ENCODE measurements at regions of chr18 and their contacts with region 1.

Region 1: DNA sequence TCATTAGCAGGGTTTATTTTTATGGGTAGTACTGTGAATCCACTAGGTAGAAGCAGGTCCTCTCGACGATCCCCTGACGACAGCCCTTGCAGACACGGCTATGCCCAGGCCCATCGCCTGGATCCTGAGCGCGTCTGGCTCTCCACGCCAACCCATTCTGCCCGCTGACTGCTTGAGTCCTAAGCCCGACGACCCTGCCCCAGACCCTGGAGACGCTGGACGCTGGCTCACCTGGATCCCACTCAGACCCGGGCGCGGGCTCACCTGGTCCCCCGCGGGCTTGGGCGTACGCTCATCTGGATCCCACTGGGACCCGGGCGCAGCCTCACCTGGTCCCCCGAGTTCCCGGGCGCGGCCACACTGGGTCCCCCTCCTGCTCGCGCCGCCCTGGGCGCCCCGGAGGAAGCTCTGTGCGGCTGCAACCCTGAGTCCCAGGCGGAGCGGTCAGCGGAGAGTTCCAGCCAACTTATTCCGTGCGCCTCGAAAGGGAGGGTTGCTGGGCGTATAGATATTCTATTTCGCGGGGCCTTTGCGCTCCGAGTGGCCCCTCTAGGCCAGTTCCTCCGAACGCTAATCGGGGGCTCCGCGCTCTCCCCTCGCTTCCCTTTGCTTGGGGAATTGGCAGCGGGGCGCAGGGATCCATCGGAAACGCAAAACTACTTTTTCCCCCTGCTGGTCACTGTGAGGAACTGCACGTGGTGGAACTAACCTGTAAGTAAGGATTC is 22.4 kb upstream of the RMP24 start:
- DNase-seq: peak; percentile 33
- H3K4me3 ChIP-seq: peak overlapping the region; percentile 62
- H3K27ac ChIP-seq: no peak overlapping the region
- H3K27me3 ChIP-seq: peaks cover 7% of the 10 kb centered on the region
- CTCF ChIP-seq: peak; percentile 94

Region 2: GRCh38 chr18:34543945-34544344 is 1406.1 kb before region 1 on chr18:
- CTCF ChIA-PET with region 1: no interaction called
- POLR2A ChIA-PET with region 1: no interaction called
- DNase-seq: no peak
- H3K4me3 ChIP-seq: no peak overlapping the region
- H3K27ac ChIP-seq: no peak overlapping the region
- H3K27me3 ChIP-seq: no peaks in the 10 kb centered on the region
- CTCF ChIP-seq: no peak

Region 3: GRCh38 chr18:35756506-35757117 is 193.5 kb before region 1 on chr18:
- CTCF ChIA-PET with region 1: interaction called, 42 read pairs
- POLR2A ChIA-PET with region 1: no interaction called
- DNase-seq: peak; percentile 6
- H3K4me3 ChIP-seq: no peak overlapping the region
- H3K27ac ChIP-seq: no peak overlapping the region
- H3K27me3 ChIP-seq: peaks cover 3% of the 10 kb centered on the region
- CTCF ChIP-seq: peak; percentile 83

Region 4: GRCh38 chr18:35889677-35890076 is 60.4 kb before region 1 on chr18:
- CTCF ChIA-PET with region 1: no interaction called
- POLR2A ChIA-PET with region 1: no interaction called
- DNase-seq: no peak
- H3K4me3 ChIP-seq: no peak overlapping the region
- H3K27ac ChIP-seq: no peak overlapping the region
- H3K27me3 ChIP-seq: no peaks in the 10 kb centered on the region
- CTCF ChIP-seq: no peak

Region 5: GRCh38 chr18:35920623-35921022 is 29.4 kb before region 1 on chr18:
- CTCF ChIA-PET with region 1: no interaction called
- POLR2A ChIA-PET with region 1: no interaction called
- DNase-seq: no peak
- H3K4me3 ChIP-seq: no peak overlapping the region
- H3K27ac ChIP-seq: no peak overlapping the region
- H3K27me3 ChIP-seq: peaks cover 4% of the 10 kb centered on the region
- CTCF ChIP-seq: no peak

Region 6: DNA sequence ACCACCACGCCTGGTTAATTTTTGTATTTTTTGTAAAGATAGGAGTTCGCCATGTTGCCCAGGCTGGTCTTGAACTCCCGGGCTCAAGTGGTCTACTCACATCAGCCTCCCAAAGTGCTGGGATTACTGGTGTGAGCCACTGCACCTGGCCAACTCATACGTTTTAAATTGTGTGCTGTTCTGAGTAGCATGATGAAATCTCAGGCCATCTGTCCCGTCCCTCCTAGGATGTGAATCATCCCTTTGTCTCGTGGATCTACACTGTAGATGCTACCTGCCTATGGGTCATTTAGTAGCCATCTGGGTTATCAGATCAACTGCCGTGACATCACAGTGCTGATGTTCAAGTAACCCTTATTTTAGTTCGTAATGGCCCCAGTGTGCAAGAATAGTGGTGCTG is 16.1 kb before region 1 on chr18:
- CTCF ChIA-PET with region 1: interaction called, 18 read pairs
- POLR2A ChIA-PET with region 1: no interaction called
- DNase-seq: no peak
- H3K4me3 ChIP-seq: no peak overlapping the region
- H3K27ac ChIP-seq: no peak overlapping the region
- H3K27me3 ChIP-seq: peaks cover 1% of the 10 kb centered on the region
- CTCF ChIP-seq: no peak

Region 7: GRCh38 chr18:35962320-35962719 is 12.3 kb after region 1 on chr18:
- CTCF ChIA-PET with region 1: interaction called, 10 read pairs
- POLR2A ChIA-PET with region 1: no interaction called
- DNase-seq: no peak
- H3K4me3 ChIP-seq: no peak overlapping the region
- H3K27ac ChIP-seq: no peak overlapping the region
- H3K27me3 ChIP-seq: no peaks in the 10 kb centered on the region
- CTCF ChIP-seq: no peak

Region 8: GRCh38 chr18:35972197-35973052 is 22.4 kb after region 1 on chr18 and contains the start of gene RMP24:
- CTCF ChIA-PET with region 1: interaction called, 10 read pairs
- POLR2A ChIA-PET with region 1: interaction called, 3 read pairs
- DNase-seq: peak; percentile 89
- H3K4me3 ChIP-seq: peak within 1 kb of the TSS; percentile 97
- H3K27ac ChIP-seq: peak within 1 kb of the TSS; percentile 75
- H3K27me3 ChIP-seq: no peaks in the 10 kb centered on the region
- CTCF ChIP-seq: no peak

Measured in AG04450 (cell line).